ENCODE measurements at regions of chr5 and their contacts with region 1.

Region 1: DNA sequence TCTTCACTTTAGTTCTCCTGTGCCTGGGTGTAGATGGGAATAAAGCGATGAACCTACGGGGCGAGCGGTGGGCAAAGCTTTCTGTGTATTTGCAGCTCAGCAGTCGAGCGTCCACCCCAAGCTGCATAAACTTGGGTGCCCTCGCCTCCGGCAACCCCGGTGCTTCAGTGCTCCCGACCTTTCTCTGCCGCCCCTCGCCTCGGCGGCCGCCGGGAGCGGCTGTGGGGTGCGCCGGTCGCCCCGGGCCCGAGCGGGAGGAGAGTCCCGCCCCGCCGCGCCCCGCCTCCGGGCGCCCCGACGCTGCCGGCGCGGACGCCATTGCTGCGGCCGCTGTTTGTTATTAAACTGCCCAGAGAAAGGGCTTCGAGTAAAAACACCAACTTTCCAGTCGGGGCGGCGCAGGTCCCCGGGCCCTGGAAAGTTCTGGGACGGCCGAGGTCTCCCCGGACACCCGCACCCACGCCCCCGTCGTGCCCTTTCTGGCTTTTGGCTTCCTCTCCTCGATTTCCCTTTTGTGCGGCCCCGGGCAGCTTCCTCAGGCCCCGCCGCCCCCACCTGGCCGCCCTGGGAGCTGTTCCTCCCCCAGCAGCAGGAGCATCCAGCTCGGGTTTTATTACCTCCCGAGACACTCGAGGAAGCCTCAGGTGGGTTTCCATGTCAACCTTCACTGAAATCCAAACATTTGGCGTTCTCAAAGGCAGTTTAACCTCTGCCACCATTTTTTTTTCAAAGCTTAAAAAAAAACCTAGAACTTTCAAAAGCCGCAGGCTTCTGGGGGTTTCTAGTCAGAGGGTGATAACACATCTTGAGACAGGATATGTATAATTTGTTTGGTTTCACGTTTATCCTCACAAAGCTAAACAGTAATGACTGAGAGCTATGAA is 334.3 kb downstream of the CWC27 start:
- DNase-seq: peak; percentile 57 to 88
- ATAC-seq: peak; percentile 87
- H3K4me3 ChIP-seq: peak overlapping the region; percentile 44 to 64
- H3K27ac ChIP-seq: peak overlapping the region in 1 of 2 donors; percentile 59
- H3K4me1 ChIP-seq: peaks cover 0 to 3% of the 10 kb centered on the region in 2 donors
- H3K27me3 ChIP-seq: no peaks in the 10 kb centered on the region

Region 2: GRCh38 chr5:64789457-64789856 is 313.6 kb before region 1 on chr5:
- intact Hi-C with region 1: no loop called
- DNase-seq: no peak
- ATAC-seq: no peak
- H3K4me3 ChIP-seq: no peak overlapping the region
- H3K27ac ChIP-seq: no peak overlapping the region
- H3K4me1 ChIP-seq: no peaks in the 10 kb centered on the region
- H3K27me3 ChIP-seq: no peaks in the 10 kb centered on the region

Region 3: DNA sequence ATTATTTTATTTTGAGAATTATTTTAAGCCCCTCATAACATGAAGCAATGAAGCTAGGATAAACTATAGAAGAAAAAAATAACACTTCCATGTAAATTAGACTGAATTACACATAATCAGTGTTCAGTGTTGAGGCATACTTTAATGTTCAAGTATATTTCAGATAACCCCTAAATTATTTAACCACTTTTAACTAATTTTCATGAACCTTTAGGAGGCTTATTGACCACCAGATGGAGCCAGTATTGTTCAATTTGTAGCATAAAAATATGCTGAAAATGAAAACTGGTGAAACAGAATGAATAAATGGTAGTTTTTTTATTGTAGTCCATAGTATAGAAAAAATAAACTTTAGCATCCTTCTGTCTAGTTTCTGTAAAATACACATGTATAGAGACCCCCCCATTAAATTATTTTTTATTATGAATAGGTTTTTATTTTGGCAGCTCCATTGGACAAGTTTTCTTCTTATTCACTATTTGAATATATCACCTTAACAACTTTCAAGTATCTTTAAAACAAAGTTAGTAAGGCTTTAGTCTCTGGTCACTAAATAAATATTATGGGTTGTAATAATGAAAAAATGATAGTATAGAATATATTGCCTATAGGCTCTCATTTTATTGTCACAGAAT is 144.2 kb before region 1 on chr5:
- intact Hi-C with region 1: loop called in 1 of 2 experiments (anchors 5 kb)
- DNase-seq: no peak
- ATAC-seq: no peak
- H3K4me3 ChIP-seq: no peak overlapping the region
- H3K27ac ChIP-seq: no peak overlapping the region
- H3K4me1 ChIP-seq: peaks cover 0 to 2% of the 10 kb centered on the region in 2 donors
- H3K27me3 ChIP-seq: no peaks in the 10 kb centered on the region

Region 4: DNA sequence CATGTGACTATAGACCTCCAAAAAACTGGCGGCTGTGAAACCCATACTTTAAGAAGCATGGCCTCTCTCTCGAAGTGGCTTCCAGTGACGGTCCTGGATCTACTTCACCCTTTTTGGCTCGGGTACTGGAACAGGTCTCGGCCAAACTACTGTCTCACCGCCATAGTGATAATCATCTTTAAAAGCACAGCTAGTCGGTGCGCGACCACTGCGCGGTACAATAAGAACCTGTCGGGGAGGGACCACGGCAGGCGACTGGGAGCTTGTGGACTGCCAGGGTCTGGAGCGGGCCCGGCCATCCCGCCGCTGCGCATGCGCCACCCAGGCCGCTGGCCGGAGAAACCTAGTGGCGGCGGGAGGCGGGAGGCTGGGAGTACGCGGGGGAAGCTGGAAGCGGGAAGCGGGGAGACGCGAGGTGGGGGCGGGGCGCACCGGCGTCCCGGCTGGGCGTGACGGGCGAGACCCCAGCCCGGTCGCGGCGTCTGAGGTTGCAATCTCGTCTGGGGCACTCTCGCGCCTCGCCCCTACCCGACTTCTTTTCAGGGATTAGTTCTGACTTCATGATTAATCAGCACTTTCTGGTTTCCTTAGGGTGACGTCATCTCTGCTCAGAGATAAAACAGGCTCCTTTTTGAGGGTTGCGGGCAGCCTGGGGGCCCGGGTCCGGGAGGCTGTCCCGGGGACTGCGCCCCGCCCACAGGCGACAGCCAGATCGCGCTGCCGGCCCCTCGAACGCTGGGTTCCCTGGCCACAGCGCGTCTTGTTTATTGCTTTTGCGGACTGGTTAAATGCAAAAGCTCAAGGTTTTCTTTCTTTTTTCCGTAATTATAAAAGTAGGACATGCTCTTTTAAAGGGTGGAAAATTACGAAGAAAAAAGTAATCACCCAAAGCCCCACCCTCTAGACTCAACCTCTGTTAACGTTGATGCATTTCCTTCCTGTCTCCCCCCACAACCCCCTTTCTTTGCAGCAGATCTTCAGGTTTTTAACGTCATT is 67.6 kb before region 1 on chr5:
- intact Hi-C with region 1: loop called (anchors 2 to 10 kb)
- DNase-seq: peak; percentile 94 to 96
- ATAC-seq: peak; percentile 95
- H3K4me3 ChIP-seq: peak overlapping the region; percentile 7 to 10
- H3K27ac ChIP-seq: peak overlapping the region; percentile 93 to 94
- H3K4me1 ChIP-seq: peaks cover 3% of the 10 kb centered on the region in 2 donors
- H3K27me3 ChIP-seq: no peaks in the 10 kb centered on the region

Region 5: GRCh38 chr5:65047948-65048690 is 55.0 kb before region 1 on chr5:
- intact Hi-C with region 1: no loop called
- DNase-seq: no peak
- ATAC-seq: no peak
- H3K4me3 ChIP-seq: no peak overlapping the region
- H3K27ac ChIP-seq: no peak overlapping the region
- H3K4me1 ChIP-seq: peaks cover 0 to 3% of the 10 kb centered on the region in 2 donors
- H3K27me3 ChIP-seq: no peaks in the 10 kb centered on the region

Region 6: GRCh38 chr5:65062469-65063083 is 40.5 kb before region 1 on chr5:
- intact Hi-C with region 1: loop called in 1 of 2 experiments (anchors 5 kb)
- DNase-seq: peak in 1 of 2 donors; percentile 72
- ATAC-seq: peak; percentile 88
- H3K4me3 ChIP-seq: no peak overlapping the region
- H3K27ac ChIP-seq: peak overlapping the region; percentile 96 to 98
- H3K4me1 ChIP-seq: peaks cover 5 to 16% of the 10 kb centered on the region in 2 donors
- H3K27me3 ChIP-seq: no peaks in the 10 kb centered on the region

Region 7: GRCh38 chr5:65364907-65365306 is 261.8 kb after region 1 on chr5:
- intact Hi-C with region 1: loop called in 1 of 2 experiments (anchors 10 kb)
- DNase-seq: no peak
- ATAC-seq: no peak
- H3K4me3 ChIP-seq: no peak overlapping the region
- H3K27ac ChIP-seq: no peak overlapping the region
- H3K4me1 ChIP-seq: peaks cover 0 to 3% of the 10 kb centered on the region in 2 donors
- H3K27me3 ChIP-seq: no peaks in the 10 kb centered on the region

Region 8: DNA sequence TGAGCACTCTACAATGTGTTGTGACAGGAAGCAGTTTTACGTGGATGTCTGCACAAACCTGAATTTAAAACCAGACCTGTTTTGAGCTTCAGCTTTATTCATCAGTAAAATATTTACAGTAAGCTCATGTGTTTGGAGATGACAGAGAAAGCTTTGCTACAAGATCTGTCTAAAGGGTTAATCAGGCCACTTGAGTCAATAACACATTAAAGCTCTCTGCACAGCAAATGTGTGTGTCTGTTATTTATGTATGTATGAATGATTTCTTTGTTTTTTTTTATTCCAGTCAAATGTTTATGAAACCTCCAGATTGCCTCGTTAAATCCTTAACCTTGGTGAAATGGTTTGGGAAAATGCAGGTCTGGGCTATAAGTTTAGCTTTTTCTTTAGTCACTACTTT is 963.8 kb after region 1 on chr5:
- intact Hi-C with region 1: no loop called
- DNase-seq: no peak
- ATAC-seq: no peak
- H3K4me3 ChIP-seq: no peak overlapping the region
- H3K27ac ChIP-seq: no peak overlapping the region
- H3K4me1 ChIP-seq: no peaks in the 10 kb centered on the region
- H3K27me3 ChIP-seq: no peaks in the 10 kb centered on the region